Activated CD4-positive, alpha-beta T cell treated with anti-CD3 and anti-CD28 coated beads, Interleukin-2, amount 10 ng/mL, durations not matched to agents 24 days and 14 days (primary cell): ENCODE measurements at regions of chr3 and their contacts with region 1.

Region 1: DNA sequence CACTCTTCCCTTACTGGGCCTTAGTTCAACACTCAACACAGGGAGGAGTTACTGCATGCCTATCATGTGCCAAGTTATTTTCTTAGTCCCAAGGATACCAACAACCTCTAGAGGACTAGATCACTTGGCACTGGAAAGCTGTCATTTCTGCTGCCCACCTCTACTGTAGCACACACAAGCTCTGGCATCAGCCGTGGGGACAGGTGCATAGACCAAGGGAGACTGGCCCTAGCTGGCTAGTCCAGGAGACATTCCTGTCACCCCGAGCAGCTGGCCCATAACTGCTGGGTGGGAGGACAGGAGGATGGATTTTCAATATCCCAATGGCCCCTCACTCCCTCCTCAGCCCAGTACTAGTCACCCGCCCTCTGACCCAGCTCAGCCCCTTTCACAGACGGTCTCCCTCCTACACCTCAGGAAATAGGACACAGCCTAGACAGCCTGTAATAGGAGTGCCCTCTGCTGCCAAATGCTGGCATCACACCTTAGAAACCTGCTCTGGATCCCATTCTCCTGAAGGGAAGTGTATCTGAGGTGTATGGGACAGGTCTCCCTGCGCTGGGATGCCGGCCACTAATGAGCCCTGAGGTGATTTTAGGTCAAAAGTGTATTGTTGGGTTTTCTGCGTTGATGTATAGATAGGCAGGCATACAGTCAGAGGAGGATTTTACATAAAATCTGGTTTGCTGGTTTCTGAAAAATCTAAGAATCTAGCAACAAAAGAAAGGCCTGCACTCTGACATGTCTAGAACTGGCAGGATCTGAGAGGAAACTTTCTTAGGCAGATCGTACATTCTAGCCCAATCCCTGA is 3.4 kb upstream of the DZIP1L start:
- DNase-seq: peak; percentile 88
- H3K4me3 Mint-ChIP-seq: no peak overlapping the region
- H3K27ac Mint-ChIP-seq: no peak overlapping the region
- H3K4me1 Mint-ChIP-seq: peaks cover 8% of the 10 kb centered on the region
- H3K27me3 Mint-ChIP-seq: peaks cover 44% of the 10 kb centered on the region

Region 2: DNA sequence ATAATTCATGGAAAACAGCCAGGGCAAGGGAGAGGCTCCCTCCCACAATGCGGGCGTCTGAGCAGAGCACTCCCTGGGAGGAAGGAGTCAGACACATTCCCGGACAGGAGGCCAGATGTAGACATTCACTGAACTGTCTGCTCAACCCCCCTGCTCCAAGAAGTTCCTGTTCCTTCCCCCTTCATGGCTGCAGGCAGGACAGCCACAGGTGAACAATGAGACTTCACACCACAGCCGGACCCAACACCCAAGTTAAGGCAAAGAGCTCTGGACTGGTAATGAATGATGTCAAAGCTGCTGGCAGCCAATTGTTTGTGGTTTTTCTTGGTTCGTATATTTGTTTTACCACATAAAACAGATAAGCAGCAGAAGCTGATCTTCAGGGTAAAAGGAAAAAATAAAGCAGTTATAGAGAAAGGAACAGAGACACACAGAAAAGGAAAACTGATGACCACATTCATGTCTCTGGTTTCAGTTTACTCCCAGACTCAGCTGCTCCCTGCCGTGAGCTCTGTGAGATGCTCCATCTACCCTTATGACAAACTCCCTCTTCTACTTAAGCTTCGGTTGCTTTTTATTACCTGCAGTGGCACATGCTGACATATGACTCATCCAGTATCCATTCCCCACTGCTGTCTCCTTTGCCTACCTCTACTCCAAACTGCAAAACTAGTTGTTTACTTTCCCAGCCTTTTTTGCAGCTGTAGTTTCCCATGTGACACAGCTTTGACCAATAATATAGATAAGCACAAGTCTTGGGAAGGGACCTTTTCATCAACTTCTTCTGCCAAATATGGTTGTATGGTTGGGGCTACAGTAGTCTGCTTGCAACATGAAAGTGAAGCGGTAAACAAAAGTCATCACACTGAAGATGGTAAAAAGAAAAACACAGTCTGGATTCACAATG is 36.5 kb before region 1 on chr3:
- intact Hi-C with region 1: loop called (anchors 5 kb)
- DNase-seq: peak; percentile 72
- H3K4me3 Mint-ChIP-seq: peak overlapping the region; percentile 36
- H3K27ac Mint-ChIP-seq: peak overlapping the region; percentile 45
- H3K4me1 Mint-ChIP-seq: peaks cover 38% of the 10 kb centered on the region
- H3K27me3 Mint-ChIP-seq: peaks cover 2% of the 10 kb centered on the region

Region 3: DNA sequence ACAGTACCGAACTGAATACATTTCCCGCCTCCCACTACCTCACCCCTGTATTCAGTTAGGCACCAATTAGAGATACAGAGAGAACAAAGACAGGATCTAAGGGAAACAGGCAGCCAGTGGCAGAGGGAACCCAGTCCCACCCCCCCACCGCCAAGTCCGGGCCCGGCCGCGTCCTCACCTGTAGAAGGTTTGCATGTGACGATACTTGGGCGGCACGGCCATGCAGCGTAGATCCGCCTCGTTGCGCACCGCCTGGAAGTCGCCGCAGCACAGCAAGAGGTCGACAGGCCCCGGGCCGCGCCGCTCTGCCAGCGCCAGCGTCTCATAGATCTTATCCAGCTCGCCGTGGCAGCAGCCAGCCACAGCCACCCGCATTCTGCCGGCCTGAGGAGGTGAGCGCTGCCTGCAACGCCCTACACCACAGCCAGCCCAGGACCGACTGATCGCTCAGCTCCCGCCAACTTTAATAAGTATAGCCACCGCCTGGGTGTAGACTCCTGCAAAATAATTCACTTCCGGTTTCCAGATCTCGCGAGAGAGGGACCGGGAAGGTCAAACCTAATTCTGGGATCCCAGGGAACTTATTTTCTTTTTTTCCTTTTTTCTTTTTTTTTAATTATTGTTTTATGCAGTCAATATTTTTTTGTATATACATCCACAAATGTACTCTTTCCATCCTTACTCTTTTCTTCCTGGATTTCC is 55.8 kb after region 1 on chr3 and contains the start of gene DBR1:
- intact Hi-C with region 1: loop called (anchors 2 kb)
- DNase-seq: peak; percentile 93
- H3K4me3 Mint-ChIP-seq: peak within 1 kb of the TSS; percentile 98
- H3K27ac Mint-ChIP-seq: peak within 1 kb of the TSS; percentile 94
- H3K4me1 Mint-ChIP-seq: peaks cover 29% of the 10 kb centered on the region
- H3K27me3 Mint-ChIP-seq: peaks cover 3% of the 10 kb centered on the region
- total RNA-seq, gene DBR1: 27.3 and 28.3 TPM in 2 replicates